ENCODE measurements at regions of chr1 and their contacts with region 1.

Region 1: DNA sequence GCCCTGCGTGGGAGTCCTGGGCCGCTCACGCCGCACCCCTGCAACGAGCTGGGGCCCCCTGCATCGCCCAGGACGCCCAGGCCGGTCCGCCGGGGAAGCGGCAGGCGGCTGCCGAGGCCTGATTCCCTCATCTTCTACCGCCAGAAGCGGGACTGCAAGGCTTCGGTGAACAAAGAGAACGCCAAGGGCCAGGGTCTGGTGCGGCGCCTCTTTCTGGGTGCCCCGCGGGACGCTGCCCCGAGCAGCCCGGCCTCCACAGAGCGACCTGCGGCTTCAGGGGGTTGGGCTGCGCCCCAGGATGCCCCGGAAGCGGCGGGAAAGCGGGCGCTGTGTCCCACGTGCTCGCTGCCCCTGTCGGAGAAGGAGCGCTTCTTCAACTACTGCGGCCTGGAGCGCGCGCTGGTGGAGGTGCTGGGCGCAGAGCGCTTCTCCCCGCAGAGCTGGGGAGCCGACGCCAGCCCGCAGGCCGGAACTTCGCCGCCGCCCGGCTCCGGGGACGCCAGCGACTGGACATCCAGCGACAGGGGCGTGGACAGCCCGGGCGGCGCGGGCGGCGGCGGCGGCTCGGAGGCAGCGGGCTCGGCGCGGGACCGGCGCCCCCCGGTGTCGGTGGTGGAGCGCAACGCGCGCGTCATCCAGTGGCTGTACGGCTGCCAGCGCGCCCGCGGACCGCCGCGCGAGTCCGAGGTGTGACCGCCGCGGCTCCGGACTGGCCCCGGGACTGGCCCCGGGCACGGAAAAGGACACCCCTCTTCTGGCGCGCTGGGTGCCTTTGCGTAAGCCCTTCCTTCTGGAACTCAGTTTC is 2.7 kb downstream of the FAM110D start:
- DNase-seq: peak in 1 of 2 donors; percentile 61
- ATAC-seq: peak; percentile 76

Region 2: DNA sequence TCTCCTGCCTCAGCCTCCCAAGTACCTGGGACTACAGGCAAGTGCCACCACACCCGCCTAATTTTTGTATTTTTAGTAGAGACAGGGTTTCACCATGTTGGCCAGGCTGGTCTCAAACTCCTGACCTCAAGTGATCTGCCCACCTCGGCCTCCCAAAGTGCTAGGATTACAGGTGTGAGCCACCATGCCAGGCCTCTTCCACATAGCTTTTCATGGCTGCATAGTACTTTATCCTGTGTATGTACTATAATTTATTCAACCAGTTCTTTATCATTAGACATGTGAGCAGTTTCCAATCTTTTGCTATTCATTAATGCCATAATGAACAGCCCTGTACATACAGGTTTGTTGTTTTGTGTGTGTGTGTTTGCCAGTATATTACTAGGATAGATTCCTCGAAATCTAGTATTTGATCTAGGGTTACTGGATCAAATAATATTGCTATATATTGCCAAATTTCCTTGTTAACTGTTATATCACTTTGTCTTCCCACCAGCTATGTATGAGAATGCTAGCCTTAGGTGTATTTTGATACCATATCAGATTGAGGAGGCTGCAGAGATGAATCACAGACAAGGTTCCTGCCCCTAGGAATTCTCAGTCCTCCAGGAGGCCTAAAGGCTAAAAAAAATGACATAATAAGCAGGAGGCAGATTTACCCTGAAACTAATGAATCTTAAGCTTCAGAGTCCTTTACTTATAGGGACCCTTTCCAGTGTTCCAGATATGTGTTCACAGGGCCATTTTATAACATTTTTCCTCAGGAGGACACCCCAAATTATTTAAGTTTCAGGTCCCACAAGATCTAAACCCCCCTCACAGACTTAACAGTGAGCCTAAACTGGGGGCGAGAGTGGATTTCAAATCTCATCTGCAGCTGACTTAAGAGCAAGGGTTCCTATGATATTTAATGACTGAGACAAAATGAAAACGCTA is 52.1 kb before region 1 on chr1:
- intact Hi-C with region 1: loop called in 1 of 2 experiments (anchors 5 kb)
- DNase-seq: no peak
- ATAC-seq: no peak